ENCODE measurements at regions of chr20 and their contacts with region 1.

Region 1: DNA sequence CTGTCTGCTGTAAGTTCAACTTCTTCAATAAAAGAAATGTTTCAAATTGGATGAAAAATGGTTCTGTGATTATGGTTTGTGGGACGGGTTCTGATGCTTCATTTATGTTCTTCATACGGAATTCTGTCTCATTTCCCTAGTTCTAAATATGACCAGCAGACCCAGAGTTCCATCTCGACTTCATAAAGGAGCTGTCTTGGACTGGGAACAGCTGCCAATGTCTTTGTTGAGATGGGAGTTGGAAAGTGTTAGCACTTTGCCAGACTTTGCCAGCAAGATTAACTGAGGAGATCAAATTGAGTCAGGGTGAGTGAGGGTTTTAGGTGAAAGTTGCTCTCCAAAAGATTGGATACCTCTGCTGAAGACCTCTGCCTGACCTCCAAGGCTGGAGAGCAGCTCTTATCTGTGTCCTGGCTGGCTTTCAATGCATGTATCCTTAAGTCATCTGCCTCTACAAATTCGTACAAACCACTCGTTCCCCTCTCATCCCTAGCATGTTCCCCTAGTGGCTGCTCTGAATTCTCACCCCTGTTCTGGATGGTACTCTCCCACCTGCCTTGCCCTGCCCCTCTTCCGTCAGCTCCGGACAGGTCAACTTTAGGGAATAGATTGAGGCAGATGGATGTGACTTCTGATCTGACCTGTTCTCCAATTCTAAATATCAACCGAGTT is at the start of gene EFCAB8:
- DNase-seq: no peak
- H3K4me3 Mint-ChIP-seq: no peak within 1 kb of the TSS
- H3K27ac Mint-ChIP-seq: no peak within 1 kb of the TSS
- H3K4me1 Mint-ChIP-seq: no peaks in the 10 kb centered on the region
- H3K27me3 Mint-ChIP-seq: no peaks in the 10 kb centered on the region
- CTCF ChIP-seq: no peak
- total RNA-seq, gene EFCAB8: not detected in 2 replicates

Region 2: DNA sequence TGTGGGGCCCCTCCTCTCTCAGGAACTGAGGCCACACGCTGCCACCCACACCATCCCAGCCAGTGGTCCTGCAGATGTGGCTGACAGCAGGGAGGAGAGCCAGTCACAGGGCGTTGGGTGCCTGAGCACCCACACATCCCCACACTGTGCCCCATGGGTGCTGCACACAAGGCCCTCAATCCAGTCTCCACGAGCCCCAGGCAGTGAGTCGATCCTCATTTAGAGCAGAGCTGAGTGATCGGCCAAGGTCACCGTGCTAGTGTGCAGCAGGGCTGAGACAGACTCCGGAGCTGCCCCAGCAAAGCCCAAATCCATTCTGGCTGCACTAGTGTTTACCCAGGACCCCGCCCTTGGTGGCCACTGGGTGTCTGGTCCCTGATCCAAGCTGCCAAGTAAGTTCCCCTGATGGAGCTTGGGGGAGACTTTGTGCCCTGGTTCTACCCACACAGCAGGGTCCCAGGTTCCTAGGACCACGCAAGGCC is 194.1 kb before region 1 on chr20:
- CTCF ChIA-PET with region 1: no interaction called
- POLR2A ChIA-PET with region 1: no interaction called
- intact Hi-C with region 1: no loop called
- DNase-seq: no peak
- H3K4me3 Mint-ChIP-seq: no peak overlapping the region
- H3K27ac Mint-ChIP-seq: no peak overlapping the region
- H3K4me1 Mint-ChIP-seq: peaks cover 6% of the 10 kb centered on the region
- H3K27me3 Mint-ChIP-seq: no peaks in the 10 kb centered on the region
- CTCF ChIP-seq: no peak

Region 3: GRCh38 chr20:32830437-32830836 is 28.4 kb before region 1 on chr20:
- CTCF ChIA-PET with region 1: no interaction called
- POLR2A ChIA-PET with region 1: no interaction called
- intact Hi-C with region 1: no loop called
- DNase-seq: no peak
- H3K4me3 Mint-ChIP-seq: no peak overlapping the region
- H3K27ac Mint-ChIP-seq: no peak overlapping the region
- H3K4me1 Mint-ChIP-seq: peaks cover 7% of the 10 kb centered on the region
- H3K27me3 Mint-ChIP-seq: no peaks in the 10 kb centered on the region
- CTCF ChIP-seq: no peak

Region 4: DNA sequence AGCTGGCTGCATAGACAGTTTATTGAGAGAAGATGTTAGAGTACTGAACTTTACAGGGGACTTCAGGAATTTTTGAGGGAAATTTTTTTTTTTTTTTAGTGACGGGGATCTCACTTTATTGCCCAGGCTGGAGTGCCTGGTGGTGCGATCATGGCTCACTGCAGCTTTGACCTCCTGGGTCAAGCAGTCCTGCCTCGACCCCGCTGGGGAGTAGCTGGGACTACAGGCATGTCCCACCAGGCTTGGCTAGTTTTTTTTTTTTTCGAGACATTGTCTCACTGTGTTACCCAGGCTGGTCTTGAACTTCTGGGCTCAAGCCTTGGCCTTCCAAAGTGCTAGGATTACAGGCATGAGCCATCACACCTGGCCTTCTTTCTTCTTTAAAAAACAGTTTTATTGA is 10.9 kb before region 1 on chr20:
- CTCF ChIA-PET with region 1: interaction called, 11 read pairs
- POLR2A ChIA-PET with region 1: no interaction called
- intact Hi-C with region 1: no loop called
- DNase-seq: no peak
- H3K4me3 Mint-ChIP-seq: no peak overlapping the region
- H3K27ac Mint-ChIP-seq: no peak overlapping the region
- H3K4me1 Mint-ChIP-seq: no peaks in the 10 kb centered on the region
- H3K27me3 Mint-ChIP-seq: no peaks in the 10 kb centered on the region
- CTCF ChIP-seq: no peak